Activated CD4-positive, alpha-beta memory T cell treated with anti-CD3 and anti-CD28 coated beads, Interleukin-2, amount 10 ng/mL, durations not matched to agents 7 days and 5 days (primary cell): ENCODE measurements at regions of chr7 and their contacts with region 1.

Region 1: DNA sequence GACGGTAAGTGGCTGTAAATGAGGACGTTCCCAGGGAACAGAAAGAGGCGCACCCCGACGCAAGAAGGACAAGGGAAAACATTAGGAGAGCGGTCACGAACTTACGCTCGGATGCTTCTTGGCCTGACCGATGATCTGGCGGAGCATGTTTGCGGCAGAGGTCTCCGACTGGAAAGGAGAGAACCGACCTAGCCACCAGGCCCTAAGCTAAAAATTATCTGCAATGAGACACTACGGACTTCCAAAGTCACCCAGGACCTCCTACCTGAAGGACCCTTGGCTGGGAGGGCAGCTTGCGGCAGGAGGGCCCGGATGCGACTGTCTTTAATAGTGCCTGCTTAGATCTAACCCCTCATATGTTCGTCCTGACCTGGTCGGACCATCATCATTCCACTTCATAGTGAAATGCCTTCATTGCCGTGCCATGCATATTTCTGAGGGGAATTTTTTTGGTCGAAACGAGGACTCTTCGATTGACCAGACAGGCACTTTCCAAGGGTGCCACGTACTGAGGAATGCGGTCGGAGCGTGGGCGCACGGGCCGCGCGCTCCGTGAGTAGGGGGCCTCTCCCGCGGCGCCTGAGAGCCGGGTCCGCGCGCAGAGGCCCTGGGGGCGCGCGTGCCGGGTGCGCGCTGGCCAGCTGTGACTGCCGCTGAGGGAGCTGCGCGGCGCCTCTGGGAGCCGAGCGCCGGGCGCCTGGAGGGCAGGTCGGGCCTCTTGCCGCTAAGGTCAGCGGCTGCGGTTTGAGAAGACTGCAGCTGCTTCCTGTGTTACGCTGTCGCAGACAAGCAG is 33.6 kb upstream of the PHF14 start:
- DNase-seq: peak; percentile 87
- H3K4me3 Mint-ChIP-seq: no peak overlapping the region
- H3K27ac Mint-ChIP-seq: no peak overlapping the region
- H3K4me1 Mint-ChIP-seq: peaks cover 15% of the 10 kb centered on the region
- H3K27me3 Mint-ChIP-seq: no peaks in the 10 kb centered on the region

Region 2: DNA sequence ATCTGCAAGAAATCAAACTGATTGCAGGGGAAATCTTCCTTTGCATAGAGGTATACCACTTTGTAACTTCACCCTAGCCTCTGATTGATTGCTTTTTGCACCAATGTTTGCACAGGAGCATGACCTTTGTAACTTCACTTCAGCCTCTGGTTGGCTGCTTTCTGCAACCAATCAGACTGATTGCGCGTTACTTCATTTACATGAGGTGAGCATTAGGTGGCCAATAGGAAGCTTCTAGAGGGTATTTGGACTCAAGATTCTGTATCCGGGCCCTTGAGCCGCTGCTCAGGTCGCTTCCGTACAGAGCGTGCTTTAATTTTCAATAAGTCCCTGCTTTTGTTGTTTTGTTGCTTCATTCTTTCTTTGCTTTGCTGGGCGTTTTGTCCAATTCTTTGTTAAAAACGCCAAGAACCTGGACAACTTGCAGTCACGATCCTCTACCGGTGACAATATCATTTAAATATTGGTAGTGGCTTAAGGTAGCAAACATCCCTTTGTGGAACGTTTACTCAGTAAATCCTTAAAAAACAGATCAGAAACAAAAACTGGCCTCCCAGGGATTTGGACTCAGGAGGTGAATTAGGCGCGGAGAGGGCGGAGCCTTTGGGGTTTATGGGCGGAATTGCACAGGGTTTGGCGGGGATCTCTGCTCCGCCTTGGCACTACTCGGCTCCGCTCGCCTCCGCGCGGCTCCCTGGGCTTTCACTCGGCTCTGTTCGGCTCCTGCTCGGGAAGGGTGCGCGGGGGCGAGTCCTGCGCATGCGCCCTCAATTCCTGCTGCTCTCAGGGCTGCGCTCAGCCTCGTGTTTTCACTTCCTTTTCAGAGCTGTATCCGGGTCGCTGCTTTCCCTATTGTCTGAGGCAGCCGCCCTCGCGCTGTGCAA is 33.2 kb after region 1 on chr7 and contains the start of gene PHF14:
- CTCF ChIA-PET with region 1: interaction called, 7 read pairs
- POLR2A ChIA-PET with region 1: interaction called, 74 read pairs
- DNase-seq: peak; percentile 96
- H3K4me3 Mint-ChIP-seq: peak within 1 kb of the TSS; percentile 85
- H3K27ac Mint-ChIP-seq: peak within 1 kb of the TSS; percentile 83
- H3K4me1 Mint-ChIP-seq: peaks cover 44% of the 10 kb centered on the region
- H3K27me3 Mint-ChIP-seq: peaks cover 4% of the 10 kb centered on the region
- total RNA-seq, gene PHF14: 26.9 to 29.1 TPM

Region 3: DNA sequence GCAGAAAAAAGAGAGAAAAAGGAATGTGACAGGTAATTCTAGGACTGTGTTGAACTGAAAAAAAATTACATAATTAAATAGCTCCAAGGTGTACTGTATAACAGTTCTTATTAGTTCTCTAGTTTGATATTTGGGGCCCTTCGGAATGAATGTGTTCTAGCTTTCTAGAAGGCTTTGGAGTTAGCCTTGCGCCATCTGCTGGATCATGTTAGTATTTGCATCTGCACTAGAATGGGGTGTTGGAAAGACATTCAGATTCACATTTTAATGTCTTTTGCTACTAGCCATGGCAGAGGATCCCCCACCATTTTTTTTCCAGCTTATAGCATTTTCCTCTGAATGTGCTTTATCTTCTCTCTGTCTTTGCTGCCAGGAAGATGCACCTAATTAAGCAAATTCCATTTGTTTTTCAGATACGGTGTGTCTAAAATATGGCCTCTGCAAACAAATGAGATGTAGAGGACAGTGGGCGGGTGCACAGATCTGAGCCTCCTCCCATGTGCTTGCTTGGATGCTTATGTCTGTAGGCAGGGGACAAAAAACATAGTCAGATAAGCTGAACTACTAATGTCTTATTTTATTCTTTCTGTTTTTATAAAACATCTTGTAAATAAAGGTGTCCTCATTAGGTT is 272.1 kb after region 1 on chr7:
- CTCF ChIA-PET with region 1: interaction called, 18 read pairs
- POLR2A ChIA-PET with region 1: no interaction called
- DNase-seq: peak; percentile 38
- H3K4me3 Mint-ChIP-seq: no peak overlapping the region
- H3K27ac Mint-ChIP-seq: no peak overlapping the region
- H3K4me1 Mint-ChIP-seq: peaks cover 1% of the 10 kb centered on the region
- H3K27me3 Mint-ChIP-seq: no peaks in the 10 kb centered on the region